AG04449 (cell line): ENCODE measurements at regions of chr5 and their contacts with region 1.

Region 1: GRCh38 chr5:122192497-122193496 is 63.5 kb downstream of the ZNF474 start:
- DNase-seq: no peak
- H3K4me3 ChIP-seq: no peak overlapping the region
- CTCF ChIP-seq: peak; percentile 55

Region 2: DNA sequence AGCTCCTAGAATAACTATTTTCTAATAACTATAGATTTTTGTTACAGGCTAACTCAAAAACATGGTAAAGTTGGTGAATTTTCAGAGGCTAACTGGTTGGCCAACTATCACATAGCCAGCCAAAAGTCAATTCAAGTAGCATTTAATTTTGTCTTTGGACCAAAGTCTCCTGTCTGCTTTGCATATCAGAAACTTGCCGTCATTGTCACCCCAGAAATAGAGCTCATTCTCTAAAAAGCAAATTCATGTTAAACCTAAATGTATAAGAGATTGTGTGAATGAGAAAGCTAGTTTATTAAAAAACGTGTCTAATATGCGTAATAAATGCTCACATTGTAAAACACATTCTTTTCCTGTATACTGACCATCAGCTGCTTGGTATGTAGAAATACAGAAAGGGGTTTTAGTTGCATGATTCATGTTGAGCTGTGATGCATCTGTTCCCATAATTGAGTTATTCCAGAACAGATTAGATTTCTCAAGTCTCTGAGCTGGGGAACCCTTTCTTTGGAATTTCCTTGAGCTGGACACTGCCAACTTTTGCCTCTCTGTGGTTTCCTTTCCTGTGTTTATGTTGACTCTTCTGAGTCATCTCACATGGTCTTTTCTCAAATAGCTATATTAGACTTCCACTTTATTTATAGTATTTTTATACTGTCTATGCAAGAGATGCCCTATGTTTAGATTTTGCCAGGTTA is 223.7 kb before region 1 on chr5:
- CTCF ChIA-PET with region 1: interaction called, 10 read pairs
- POLR2A ChIA-PET with region 1: no interaction called
- DNase-seq: peak; percentile 97
- H3K4me3 ChIP-seq: no peak overlapping the region
- CTCF ChIP-seq: no peak

Region 3: GRCh38 chr5:122063836-122064235 is 129.0 kb before region 1 on chr5:
- CTCF ChIA-PET with region 1: no interaction called
- POLR2A ChIA-PET with region 1: no interaction called
- DNase-seq: no peak
- H3K4me3 ChIP-seq: no peak overlapping the region
- CTCF ChIP-seq: no peak

Region 4: DNA sequence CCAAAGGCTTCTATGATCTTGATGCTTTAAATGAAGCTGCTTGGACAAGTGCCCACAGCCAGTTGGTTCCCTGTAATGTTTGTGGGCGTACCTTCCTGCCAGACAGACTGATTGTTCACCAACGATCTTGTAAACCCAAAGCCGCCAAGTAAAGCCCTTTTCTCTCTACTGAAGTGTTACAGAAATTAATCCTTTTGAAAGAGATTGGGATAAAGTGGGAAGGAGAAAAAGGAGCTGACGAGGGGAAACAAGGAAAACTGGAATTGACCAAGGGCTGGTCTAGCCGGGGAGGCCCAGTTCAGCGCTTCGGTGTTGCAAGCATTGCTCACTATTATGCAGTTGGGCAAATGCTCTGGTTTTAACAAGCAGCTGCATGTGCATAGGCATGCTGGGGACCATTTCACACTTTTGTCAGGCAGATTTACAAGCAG is 10.3 kb before region 1 on chr5:
- CTCF ChIA-PET with region 1: interaction called, 10 read pairs
- POLR2A ChIA-PET with region 1: no interaction called
- DNase-seq: no peak
- H3K4me3 ChIP-seq: peak overlapping the region; percentile 18; the same call in 1 of the 2 replicates
- CTCF ChIP-seq: no peak

Region 5: GRCh38 chr5:122415030-122415800 is 222.4 kb after region 1 on chr5:
- CTCF ChIA-PET with region 1: interaction called, 101 read pairs
- POLR2A ChIA-PET with region 1: no interaction called
- DNase-seq: peak; percentile 24
- H3K4me3 ChIP-seq: no peak overlapping the region
- CTCF ChIP-seq: peak; percentile 78

Region 6: DNA sequence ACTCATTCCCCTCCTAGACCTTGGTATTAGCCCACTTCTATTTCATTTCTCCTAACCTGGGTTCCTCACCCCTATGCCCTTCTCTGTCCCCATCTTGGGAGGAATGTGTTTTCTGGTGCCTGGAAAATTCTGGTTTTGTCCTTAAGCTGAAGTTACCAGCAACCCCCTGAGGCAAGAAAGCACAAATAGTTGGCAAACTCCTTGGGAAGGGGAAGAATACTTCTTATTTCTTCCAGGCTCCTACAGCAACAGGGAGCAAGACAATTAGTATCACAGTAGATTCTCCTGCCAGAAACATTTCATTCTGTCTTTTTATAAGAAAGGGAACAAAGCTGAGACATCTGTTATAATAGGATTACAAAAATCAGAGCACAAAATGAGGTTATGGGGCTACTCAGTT is 261.7 kb after region 1 on chr5:
- CTCF ChIA-PET with region 1: interaction called, 11 read pairs
- POLR2A ChIA-PET with region 1: no interaction called
- DNase-seq: no peak
- H3K4me3 ChIP-seq: no peak overlapping the region
- CTCF ChIP-seq: no peak

Region 7: DNA sequence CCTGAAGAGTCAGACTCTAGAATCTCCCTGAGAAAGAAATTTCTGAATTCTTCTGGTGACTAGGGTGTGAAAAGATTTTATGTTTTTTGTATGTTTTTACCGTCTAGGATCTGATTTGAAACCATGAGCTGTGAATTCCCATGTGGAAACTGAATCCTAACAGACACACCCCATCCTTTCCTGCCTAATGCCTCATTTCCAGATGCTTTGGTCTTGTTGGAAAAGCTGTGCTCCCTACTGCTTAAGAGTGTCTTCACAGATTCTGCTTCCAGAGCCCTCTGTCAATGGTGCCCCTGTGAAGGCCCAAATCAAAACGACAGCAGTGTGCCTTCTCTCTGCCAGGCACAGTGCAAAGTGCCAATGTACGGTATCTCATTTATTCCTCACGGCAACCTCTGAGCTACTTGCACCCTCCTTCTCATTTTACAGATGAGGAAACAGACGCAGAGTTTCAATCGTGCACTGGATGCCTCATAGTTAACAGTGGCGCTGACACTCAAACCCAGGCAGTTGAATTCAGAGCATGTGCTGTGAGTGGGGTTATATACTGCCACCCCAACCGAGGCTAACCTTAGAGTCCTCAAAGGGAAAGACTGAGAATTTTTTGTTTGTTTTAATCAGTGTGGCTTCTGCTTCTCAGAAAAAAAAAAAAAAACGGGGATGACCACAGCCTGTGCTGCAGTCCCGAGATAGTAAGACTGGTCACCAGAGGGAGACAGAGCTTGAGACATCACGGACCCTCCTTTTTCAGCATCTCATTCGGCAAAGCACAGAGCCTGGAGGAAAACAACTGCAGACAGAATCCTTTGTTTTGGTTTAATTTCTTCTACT is 307.7 kb after region 1 on chr5:
- CTCF ChIA-PET with region 1: interaction called, 18 read pairs
- POLR2A ChIA-PET with region 1: no interaction called
- DNase-seq: no peak
- H3K4me3 ChIP-seq: no peak overlapping the region
- CTCF ChIP-seq: peak; percentile 64